K562 (cell line): ENCODE measurements at regions of chr5 and their contacts with region 1.

Region 1: DNA sequence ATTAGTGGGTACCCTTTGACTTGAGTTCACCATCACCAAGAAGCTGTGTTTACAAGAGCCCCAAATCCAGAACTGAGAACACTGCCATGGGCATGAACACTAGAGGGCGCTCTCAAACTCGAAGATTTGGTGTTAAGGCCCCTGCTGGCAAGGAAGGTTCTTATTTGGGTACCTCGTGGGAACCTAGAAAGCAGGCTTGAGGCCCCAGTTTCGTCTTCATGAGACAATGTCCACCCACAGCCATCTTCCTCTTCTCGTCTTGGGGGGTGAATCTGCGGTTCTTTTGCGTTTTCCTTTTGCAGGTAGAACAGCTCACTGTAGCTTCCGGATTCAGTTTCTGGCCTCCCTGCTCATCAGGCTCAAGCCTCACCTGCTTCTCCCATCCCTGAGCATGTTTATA is 184.0 kb downstream of the SEMA5A start:
- DNase-seq: peak; percentile 58 to 72 (median 66)
- ATAC-seq: peak; percentile 87
- H3K4me3 ChIP-seq: no peak overlapping the region
- H3K27ac ChIP-seq: no peak overlapping the region
- H3K4me1 ChIP-seq: no peaks in the 10 kb centered on the region
- H3K27me3 ChIP-seq: no peaks in the 10 kb centered on the region
- CTCF ChIP-seq: peak; percentile 69 to 93 (median 78)
- EP300 ChIP-seq: no peak
- POLR2A ChIP-seq: no peak
- RAD21 ChIP-seq: peak; percentile 18 to 59

Region 2: GRCh38 chr5:7941692-7942091 is 1420.1 kb before region 1 on chr5:
- CTCF ChIA-PET with region 1: no interaction called
- POLR2A ChIA-PET with region 1: no interaction called
- in situ Hi-C with region 1: no loop called
- intact Hi-C with region 1: no loop called
- DNase-seq: no peak
- ATAC-seq: no peak
- H3K4me3 ChIP-seq: no peak overlapping the region
- H3K27ac ChIP-seq: no peak overlapping the region
- H3K4me1 ChIP-seq: no peaks in the 10 kb centered on the region
- H3K27me3 ChIP-seq: no peaks in the 10 kb centered on the region
- CTCF ChIP-seq: no peak
- EP300 ChIP-seq: no peak
- POLR2A ChIP-seq: no peak
- RAD21 ChIP-seq: no peak

Region 3: GRCh38 chr5:9544502-9545135 is 182.8 kb after region 1 on chr5:
- CTCF ChIA-PET with region 1: no interaction called
- POLR2A ChIA-PET with region 1: no interaction called
- in situ Hi-C with region 1: no loop called
- intact Hi-C with region 1: loop called (anchors 2 kb)
- DNase-seq: peak; percentile 65 to 77 (median 68)
- ATAC-seq: peak; percentile 88
- H3K4me3 ChIP-seq: no peak overlapping the region
- H3K27ac ChIP-seq: no peak overlapping the region
- H3K4me1 ChIP-seq: peaks cover 0 to 21% of the 10 kb centered on the region in 2 experiments; a peak in 2 of 5 replicates
- H3K27me3 ChIP-seq: peaks cover 0 to 4% of the 10 kb centered on the region in 2 experiments; a peak in 1 of 5 replicates
- CTCF ChIP-seq: peak; percentile 80 to 88 (median 85)
- EP300 ChIP-seq: no peak
- POLR2A ChIP-seq: no peak
- RAD21 ChIP-seq: peak; percentile 43 to 61; a peak in 3 of 4 replicates

Region 4: DNA sequence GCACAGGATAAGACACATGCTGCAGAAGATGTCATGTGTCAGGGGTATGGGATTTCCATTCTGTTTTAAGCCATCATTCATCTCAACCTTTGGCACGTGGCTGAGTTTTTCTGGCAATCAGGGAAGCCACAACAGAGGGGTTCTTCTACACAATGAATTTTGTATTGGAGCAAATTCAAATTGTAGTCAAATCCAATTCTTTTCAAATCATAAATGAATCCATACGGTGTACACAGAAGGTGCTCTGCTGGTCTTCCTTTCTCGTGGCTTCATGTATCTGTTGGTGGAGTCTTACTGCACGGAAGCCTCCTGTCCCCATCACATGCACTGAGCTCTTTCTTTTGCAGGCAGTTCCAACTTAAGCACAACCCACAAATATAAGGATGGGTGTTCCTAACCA is 1835.9 kb after region 1 on chr5:
- CTCF ChIA-PET with region 1: no interaction called
- POLR2A ChIA-PET with region 1: no interaction called
- in situ Hi-C with region 1: no loop called
- intact Hi-C with region 1: no loop called
- DNase-seq: no peak
- ATAC-seq: no peak
- H3K4me3 ChIP-seq: no peak overlapping the region
- H3K27ac ChIP-seq: no peak overlapping the region
- H3K4me1 ChIP-seq: no peaks in the 10 kb centered on the region
- H3K27me3 ChIP-seq: peaks cover 0 to 1% of the 10 kb centered on the region in 2 experiments; a peak in 3 of 5 replicates
- CTCF ChIP-seq: no peak
- EP300 ChIP-seq: no peak
- POLR2A ChIP-seq: no peak
- RAD21 ChIP-seq: no peak